Psoas muscle (tissue), 8 donors: ENCODE measurements at regions of chr5 and their contacts with region 1.

Region 1: GRCh38 chr5:176388444-176389134 is at the starts of genes HIGD2A and NOP16:
- DNase-seq: peak; percentile 99 to 100
- ATAC-seq: peak; percentile 93 to 94 (median 94)
- H3K4me3 ChIP-seq: peak within 1 kb of the TSS; percentile 95
- H3K27ac ChIP-seq: peak within 1 kb of the TSS; percentile 94
- H3K4me1 ChIP-seq: peaks cover 29% of the 10 kb centered on the region
- H3K27me3 ChIP-seq: peaks cover 0 to 1% (median 0%) of the 10 kb centered on the region in 3 donors
- CTCF ChIP-seq: no peak
- total RNA-seq, gene HIGD2A: 181 to 215 (median 212) TPM
- total RNA-seq, gene NOP16: 35.6 to 76.2 (median 59.9) TPM

Region 2: DNA sequence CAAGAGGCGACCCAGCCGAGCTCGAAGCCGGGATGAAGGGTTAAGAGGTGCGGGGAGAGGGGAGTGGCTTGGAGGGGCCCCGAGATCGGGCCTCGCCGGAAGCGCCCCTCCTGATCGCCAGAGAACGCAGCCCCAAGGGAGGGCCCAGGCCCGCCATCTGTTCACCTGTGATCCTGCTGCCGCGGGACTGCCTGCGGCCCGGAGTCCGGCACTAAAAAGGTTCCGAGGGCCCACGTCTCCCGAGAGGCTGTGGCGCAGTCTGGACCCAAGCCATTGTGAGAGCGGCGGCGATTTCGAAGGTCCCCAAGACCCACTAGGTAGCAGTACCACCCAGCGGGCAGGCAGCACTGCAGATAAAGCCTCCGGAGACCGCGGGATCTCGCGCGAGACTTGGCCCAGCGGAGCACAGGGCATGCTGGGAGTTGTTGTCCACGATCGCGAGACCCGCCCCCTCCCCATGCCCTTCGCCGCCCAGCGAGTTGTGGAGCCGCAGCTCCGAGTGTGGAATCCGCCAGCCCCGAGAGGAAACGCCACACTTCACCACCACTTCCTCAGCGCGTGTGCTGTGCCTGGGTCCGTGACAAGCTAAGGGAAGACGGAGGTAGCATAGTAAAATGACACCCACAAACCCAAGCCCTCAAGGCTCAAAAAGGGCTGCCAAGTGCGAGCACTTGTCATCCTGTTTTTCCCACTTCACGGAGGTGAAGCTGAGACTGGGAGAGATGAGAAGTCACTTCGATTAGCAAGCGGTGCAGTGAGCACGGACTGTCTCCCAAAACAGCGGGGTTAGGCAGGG is 27.0 kb before region 1 on chr5 and contains the start of gene KIAA1191:
- intact Hi-C with region 1: loop called in 1 of 2 experiments (anchors 2 kb)
- DNase-seq: peak; percentile 96 to 98
- ATAC-seq: peak; percentile 94 to 96 (median 95)
- H3K4me3 ChIP-seq: peak within 1 kb of the TSS; percentile 90
- H3K27ac ChIP-seq: peak within 1 kb of the TSS; percentile 91
- H3K4me1 ChIP-seq: peaks cover 24% of the 10 kb centered on the region
- H3K27me3 ChIP-seq: no peaks in the 10 kb centered on the region
- CTCF ChIP-seq: no peak
- total RNA-seq, gene KIAA1191: 46.9 to 201 (median 74.3) TPM

Region 3: GRCh38 chr5:176410486-176411180 is 22.0 kb after region 1 on chr5:
- intact Hi-C with region 1: loop called in 1 of 2 experiments (anchors 2 kb)
- DNase-seq: no peak
- ATAC-seq: no peak
- H3K4me3 ChIP-seq: no peak overlapping the region
- H3K27ac ChIP-seq: peak overlapping the region; percentile 4
- H3K4me1 ChIP-seq: peaks cover 50% of the 10 kb centered on the region
- H3K27me3 ChIP-seq: no peaks in the 10 kb centered on the region
- CTCF ChIP-seq: no peak